A549 (cell line): ENCODE measurements at regions of chr16 and their contacts with region 1.

Region 1: GRCh38 chr16:28950648-28951409 is at the start of gene NFATC2IP:
- DNase-seq: peak; percentile 98 to 100
- ATAC-seq: peak; percentile 93 to 97
- H3K4me3 ChIP-seq: peak within 1 kb of the TSS; percentile 91
- H3K27ac ChIP-seq: peak within 1 kb of the TSS; percentile 89 to 97
- H3K4me1 ChIP-seq: peaks cover 14% of the 10 kb centered on the region
- CTCF ChIP-seq: no peak
- EP300 ChIP-seq: no peak
- POLR2A ChIP-seq: peak; percentile 81
- RAD21 ChIP-seq: no peak
- polyA plus RNA-seq, gene NFATC2IP: 32.2 and 35.7 TPM in 2 replicates

Region 2: GRCh38 chr16:28823872-28824716 is 126.7 kb before region 1 on chr16:
- CTCF ChIA-PET with region 1: interaction called, 13 read pairs
- POLR2A ChIA-PET with region 1: interaction called, 13 read pairs
- DNase-seq: peak; percentile 96 to 99
- ATAC-seq: peak; percentile 82 to 93
- H3K4me3 ChIP-seq: peak overlapping the region; percentile 100
- H3K27ac ChIP-seq: peak overlapping the region; percentile 95 to 100
- H3K4me1 ChIP-seq: peaks cover 37% of the 10 kb centered on the region
- CTCF ChIP-seq: no peak
- EP300 ChIP-seq: no peak
- POLR2A ChIP-seq: peak; percentile 32
- RAD21 ChIP-seq: no peak

Region 3: GRCh38 chr16:28863929-28864793 is 86.7 kb before region 1 on chr16:
- CTCF ChIA-PET with region 1: interaction called, 190 read pairs
- POLR2A ChIA-PET with region 1: interaction called, 14 read pairs
- DNase-seq: no peak
- ATAC-seq: peak; percentile 13 to 14; a peak in 3 of 6 replicates
- H3K4me3 ChIP-seq: peak overlapping the region; percentile 99
- H3K27ac ChIP-seq: peak overlapping the region; percentile 93 to 98
- H3K4me1 ChIP-seq: peaks cover 10% of the 10 kb centered on the region; the same call in 2 of the 3 replicates
- CTCF ChIP-seq: no peak
- EP300 ChIP-seq: no peak
- POLR2A ChIP-seq: no peak
- RAD21 ChIP-seq: no peak

Region 4: DNA sequence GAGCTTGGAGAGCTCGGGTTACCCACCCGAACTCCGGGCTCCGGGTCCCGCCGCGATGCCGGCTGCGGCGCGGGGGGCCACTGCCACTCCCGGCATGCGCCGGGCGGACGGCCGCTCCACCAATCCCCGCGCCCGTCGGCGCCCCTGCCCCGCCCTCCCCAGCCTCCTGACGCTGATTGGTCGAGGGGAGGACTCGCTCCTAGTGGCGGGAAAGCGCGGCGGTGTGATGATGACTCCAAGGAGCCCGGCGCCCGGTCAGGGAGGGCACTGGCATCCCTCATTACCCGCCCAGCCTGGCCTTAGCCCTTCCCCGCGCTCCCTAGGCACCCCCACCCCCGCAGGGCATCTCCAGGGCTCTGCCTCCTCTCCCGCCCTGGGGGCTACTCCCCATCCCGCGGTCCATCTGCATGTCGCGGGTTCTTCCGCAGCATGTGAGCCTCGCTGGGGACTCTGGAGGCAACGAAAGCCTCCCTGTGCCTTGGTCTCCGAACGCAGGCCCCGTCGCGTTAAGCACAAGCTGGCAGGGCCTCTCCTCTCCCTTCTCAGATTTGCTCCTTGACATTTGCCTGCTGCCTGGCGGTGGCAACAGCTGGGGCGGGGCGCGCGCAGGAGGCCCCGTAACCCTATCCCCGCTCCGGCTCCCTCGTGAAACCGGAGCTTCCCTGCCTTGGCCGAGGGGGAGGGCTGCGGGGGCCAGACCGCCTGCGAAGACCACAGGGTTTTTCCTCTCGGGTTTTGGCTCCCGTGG is 70.8 kb before region 1 on chr16:
- CTCF ChIA-PET with region 1: interaction called, 190 read pairs
- POLR2A ChIA-PET with region 1: no interaction called
- DNase-seq: peak; percentile 86 to 97
- ATAC-seq: peak; percentile 84 to 91
- H3K4me3 ChIP-seq: peak overlapping the region; percentile 65
- H3K27ac ChIP-seq: peak overlapping the region; percentile 73 to 88
- H3K4me1 ChIP-seq: peaks cover 23% of the 10 kb centered on the region; the same call in 2 of the 3 replicates
- CTCF ChIP-seq: no peak
- EP300 ChIP-seq: no peak
- POLR2A ChIP-seq: peak; percentile 74
- RAD21 ChIP-seq: no peak

Region 5: GRCh38 chr16:28897826-28898225 is 53.0 kb before region 1 on chr16:
- CTCF ChIA-PET with region 1: interaction called, 16 read pairs
- POLR2A ChIA-PET with region 1: no interaction called
- DNase-seq: no peak
- ATAC-seq: no peak
- H3K4me3 ChIP-seq: no peak overlapping the region
- H3K27ac ChIP-seq: no peak overlapping the region
- H3K4me1 ChIP-seq: no peaks in the 10 kb centered on the region
- CTCF ChIP-seq: no peak
- EP300 ChIP-seq: no peak
- POLR2A ChIP-seq: no peak
- RAD21 ChIP-seq: no peak

Region 6: GRCh38 chr16:28924732-28925385 is 26.0 kb before region 1 on chr16 and contains the start of gene RABEP2:
- CTCF ChIA-PET with region 1: interaction called, 92 read pairs
- POLR2A ChIA-PET with region 1: interaction called, 4 read pairs
- DNase-seq: peak; percentile 89 to 97
- ATAC-seq: peak; percentile 89 to 94
- H3K4me3 ChIP-seq: peak within 1 kb of the TSS; percentile 60
- H3K27ac ChIP-seq: peak within 1 kb of the TSS; percentile 93
- H3K4me1 ChIP-seq: peaks cover 10% of the 10 kb centered on the region; the same call in 2 of the 3 replicates
- CTCF ChIP-seq: no peak
- EP300 ChIP-seq: no peak
- POLR2A ChIP-seq: 0 out of 2 replicates have a peak, but pooled peaks have one; percentile 10
- RAD21 ChIP-seq: no peak
- polyA plus RNA-seq, gene RABEP2: 5.4 and 6.0 TPM in 2 replicates

Region 7: DNA sequence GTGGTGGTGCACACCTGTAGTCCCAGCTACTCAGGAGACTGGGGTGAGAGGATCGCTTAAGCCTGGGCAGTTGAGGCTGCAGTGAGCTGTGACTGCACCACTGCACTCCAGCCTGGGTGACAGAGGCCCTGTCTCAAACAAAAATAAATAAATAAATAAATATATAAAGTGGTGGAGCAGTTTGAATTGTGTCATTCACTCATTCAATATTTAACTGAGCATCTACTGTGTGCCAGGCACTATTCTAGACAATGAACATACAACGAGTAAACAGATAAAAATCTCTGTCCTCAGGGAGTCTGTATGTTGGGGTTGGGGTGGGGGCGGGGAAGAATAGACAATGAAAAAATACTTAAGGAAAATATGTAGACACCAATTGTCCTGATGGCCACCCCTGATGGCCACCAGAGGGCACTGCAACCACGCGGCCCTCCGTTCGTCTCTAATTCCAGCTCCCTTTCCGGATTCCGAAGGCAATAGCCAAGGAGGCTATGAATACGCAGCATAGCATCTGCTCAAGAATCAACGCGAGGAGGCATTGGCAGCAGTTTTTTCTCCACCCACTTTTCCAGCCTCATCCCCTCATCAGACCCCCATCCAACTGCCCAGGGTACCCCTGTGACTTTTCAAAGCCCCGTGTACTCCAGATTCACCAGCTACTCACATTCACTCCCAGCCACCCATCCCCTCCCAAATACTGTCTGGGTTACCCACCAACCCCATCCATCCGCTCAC is 749.6 kb after region 1 on chr16:
- CTCF ChIA-PET with region 1: no interaction called
- POLR2A ChIA-PET with region 1: no interaction called
- DNase-seq: peak; percentile 92 to 96
- ATAC-seq: peak; percentile 93 to 94
- H3K4me3 ChIP-seq: no peak overlapping the region
- H3K27ac ChIP-seq: peak overlapping the region; percentile 34 to 55; a peak in 5 of 6 replicates
- H3K4me1 ChIP-seq: peaks cover 4% of the 10 kb centered on the region; the same call in 1 of the 3 replicates
- CTCF ChIP-seq: peak; percentile 96
- EP300 ChIP-seq: no peak
- POLR2A ChIP-seq: no peak
- RAD21 ChIP-seq: peak; percentile 94 to 95